ENCODE measurements at regions of chr1 and their contacts with region 1.

Region 1: DNA sequence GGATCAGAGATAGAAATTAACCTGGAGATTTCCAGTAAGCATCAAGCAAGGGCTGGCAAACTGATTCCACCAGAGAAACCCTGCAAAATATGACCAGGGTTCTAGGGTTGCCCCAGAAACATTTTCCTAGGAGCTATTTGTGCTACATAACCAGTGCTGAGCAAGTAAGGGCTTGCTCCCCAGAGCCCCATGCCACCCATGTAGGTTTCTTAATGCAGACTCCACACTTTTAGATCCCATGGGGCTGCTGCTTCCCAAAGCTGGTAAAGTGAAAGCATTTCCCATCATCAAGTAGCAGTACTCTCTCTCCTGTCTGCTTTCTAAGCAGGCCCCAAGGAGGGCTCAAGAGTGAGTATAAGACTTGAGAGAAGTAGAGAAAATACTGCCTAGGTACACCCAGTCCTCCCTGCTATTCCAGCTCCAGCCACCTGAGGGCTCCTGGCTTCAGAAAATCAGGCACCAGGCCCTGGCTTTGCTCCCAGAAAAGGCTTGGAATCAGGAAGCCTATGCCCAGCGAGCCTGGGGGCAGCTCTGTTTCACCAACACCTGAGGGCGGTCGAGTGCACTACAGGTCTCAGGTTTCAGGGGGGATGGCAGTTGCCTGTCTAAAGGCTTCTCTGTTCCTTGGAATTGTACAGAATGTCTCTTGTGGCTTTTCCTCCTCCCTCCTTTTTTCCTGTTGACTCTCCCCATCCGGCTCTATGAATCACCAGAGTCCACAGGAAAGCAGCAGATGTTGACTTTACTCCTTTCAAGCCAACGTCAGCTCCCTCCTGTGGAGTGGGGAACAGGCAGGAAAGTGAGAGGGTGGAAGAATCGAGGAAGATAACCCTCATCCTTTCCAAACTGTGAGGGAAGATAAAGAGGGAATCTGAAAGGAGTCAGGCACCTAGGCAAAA is 6.2 kb upstream of the ANKRD35 start:
- DNase-seq: peak; percentile 98
- H3K4me3 Mint-ChIP-seq: peak overlapping the region; percentile 31
- H3K27ac Mint-ChIP-seq: peak overlapping the region; percentile 71
- H3K4me1 Mint-ChIP-seq: peaks cover 66% of the 10 kb centered on the region
- H3K27me3 Mint-ChIP-seq: no peaks in the 10 kb centered on the region
- CTCF ChIP-seq: peak; percentile 96

Region 2: DNA sequence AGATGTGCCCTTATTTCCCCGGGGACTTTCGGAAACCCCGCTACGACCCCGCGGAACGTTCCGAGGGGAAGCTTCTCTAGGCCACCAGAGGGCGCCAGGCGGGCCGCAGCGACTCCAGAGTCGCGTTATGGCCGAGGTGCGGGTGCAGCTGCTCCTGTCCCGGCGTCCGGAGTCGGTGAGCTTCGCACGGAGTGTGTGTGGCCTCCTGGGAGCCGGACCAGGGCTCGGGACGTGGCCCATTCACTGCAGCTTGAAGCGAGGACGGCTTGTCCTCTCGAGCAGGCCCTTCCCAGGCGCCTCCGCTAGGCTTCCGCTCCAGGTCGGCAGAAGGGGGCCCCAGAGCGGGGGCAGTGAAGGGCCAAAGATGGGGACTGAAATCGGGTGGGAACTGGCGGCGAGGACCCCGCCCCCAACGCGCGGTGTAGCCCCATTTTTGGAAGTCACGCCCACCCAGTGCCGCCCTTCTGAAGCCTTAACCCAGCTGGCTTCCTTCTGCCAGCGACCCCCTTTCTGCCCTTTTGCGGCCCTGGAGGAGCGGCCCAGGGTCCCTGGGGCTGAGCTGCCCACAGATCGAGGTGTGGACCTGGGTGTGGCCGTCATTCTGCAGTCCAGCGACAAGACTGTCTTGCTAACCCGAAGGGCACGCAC is 46.2 kb before region 1 on chr1 and contains the start of gene NUDT17:
- CTCF ChIA-PET with region 1: interaction called, 49 read pairs
- intact Hi-C with region 1: loop called (anchors 1 kb)
- DNase-seq: peak; percentile 87
- H3K4me3 Mint-ChIP-seq: no peak within 1 kb of the TSS
- H3K27ac Mint-ChIP-seq: no peak within 1 kb of the TSS
- H3K4me1 Mint-ChIP-seq: peaks cover 10% of the 10 kb centered on the region
- H3K27me3 Mint-ChIP-seq: no peaks in the 10 kb centered on the region
- CTCF ChIP-seq: peak; percentile 92
- total RNA-seq, gene NUDT17: 2.8 and 4.0 TPM in 2 replicates

Region 3: DNA sequence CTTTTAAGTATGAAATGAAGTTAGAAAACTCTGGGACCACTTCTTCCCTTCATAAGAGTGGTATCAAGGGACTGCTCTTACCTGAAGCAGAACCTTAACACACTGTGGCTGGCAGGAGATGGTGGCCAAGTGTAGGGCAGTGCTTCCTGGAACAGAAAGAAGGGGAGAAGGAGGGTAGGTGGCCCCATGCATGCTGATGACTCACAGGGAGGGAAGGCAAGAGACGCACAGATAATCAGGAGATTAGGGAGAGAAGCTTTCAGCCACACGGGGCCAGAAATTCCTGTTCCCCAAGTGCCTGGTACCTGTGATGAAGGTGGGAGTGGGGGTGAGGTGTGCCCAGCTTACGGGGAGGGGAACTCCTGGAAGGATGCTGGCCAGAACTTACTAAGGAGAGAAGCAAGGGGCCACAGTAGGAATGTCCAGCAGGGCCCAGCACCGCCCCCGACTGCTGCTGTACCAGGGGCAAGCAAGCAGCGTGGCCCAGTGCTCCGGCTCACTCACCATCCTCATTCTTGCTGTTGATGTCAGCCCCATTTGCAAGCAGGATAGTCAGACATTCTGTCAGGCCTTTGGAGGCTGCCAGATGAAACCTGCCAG is 13.8 kb before region 1 on chr1:
- CTCF ChIA-PET with region 1: interaction called, 10 read pairs
- intact Hi-C with region 1: no loop called
- DNase-seq: peak; percentile 68
- H3K4me3 Mint-ChIP-seq: peak overlapping the region; percentile 24
- H3K27ac Mint-ChIP-seq: peak overlapping the region; percentile 71
- H3K4me1 Mint-ChIP-seq: peaks cover 40% of the 10 kb centered on the region
- H3K27me3 Mint-ChIP-seq: peaks cover 14% of the 10 kb centered on the region
- CTCF ChIP-seq: no peak

Region 4: GRCh38 chr1:145918144-145918992 is 26.5 kb after region 1 on chr1 and contains the start of gene PEX11B:
- CTCF ChIA-PET with region 1: interaction called, 18 read pairs
- intact Hi-C with region 1: no loop called
- DNase-seq: peak; percentile 90
- H3K4me3 Mint-ChIP-seq: peak within 1 kb of the TSS; percentile 74
- H3K27ac Mint-ChIP-seq: peak within 1 kb of the TSS; percentile 78
- H3K4me1 Mint-ChIP-seq: peaks cover 15% of the 10 kb centered on the region
- H3K27me3 Mint-ChIP-seq: no peaks in the 10 kb centered on the region
- CTCF ChIP-seq: no peak
- total RNA-seq, gene PEX11B: 27.1 and 27.3 TPM in 2 replicates

Region 5: GRCh38 chr1:145963995-145964901 is 72.4 kb after region 1 on chr1 and contains the starts of genes ANKRD34A and POLR3GL:
- CTCF ChIA-PET with region 1: interaction called, 12 read pairs
- intact Hi-C with region 1: no loop called
- DNase-seq: peak; percentile 94
- H3K4me3 Mint-ChIP-seq: peak within 1 kb of the TSS; percentile 89
- H3K27ac Mint-ChIP-seq: peak within 1 kb of the TSS; percentile 74
- H3K4me1 Mint-ChIP-seq: peaks cover 48% of the 10 kb centered on the region
- H3K27me3 Mint-ChIP-seq: peaks cover 48% of the 10 kb centered on the region
- CTCF ChIP-seq: no peak
- total RNA-seq, gene ANKRD34A: 0.19 and 0.27 TPM in 2 replicates
- total RNA-seq, gene POLR3GL: 9.9 and 11.5 TPM in 2 replicates

Region 6: DNA sequence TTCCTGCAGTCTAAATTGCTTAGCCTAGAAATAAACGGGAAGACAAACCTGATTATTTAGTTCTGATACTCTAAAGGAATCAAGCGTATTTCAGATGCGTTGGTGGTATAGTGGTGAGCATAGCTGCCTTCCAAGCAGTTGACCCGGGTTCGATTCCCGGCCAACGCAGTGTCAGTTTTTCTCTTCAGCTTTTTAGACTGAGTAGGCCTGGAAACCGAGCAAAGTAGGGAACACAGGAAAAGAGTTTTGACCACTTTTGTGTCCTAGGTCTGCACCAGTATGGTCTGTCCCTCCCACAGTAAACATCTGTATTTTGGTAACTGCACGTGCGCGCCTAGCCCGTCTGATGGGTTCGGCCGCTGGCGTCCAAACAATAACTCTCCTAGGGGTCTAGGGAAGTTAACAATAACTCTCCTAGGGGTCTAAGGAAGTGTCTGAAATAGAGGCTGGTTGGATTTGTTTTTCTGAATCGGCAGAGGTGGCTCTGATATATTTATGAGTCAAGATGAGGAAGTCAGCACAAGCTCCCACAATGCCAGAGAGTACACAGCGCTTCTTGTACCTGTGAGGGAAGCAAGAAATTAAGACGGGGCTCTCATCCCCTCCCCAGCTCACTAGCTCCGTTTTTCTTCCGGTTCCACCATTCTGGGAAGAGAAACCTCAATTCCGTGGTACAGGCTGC is 145.3 kb after region 1 on chr1:
- CTCF ChIA-PET with region 1: interaction called, 10 read pairs
- intact Hi-C with region 1: no loop called
- DNase-seq: peak; percentile 86
- H3K4me3 Mint-ChIP-seq: peak overlapping the region; percentile 89
- H3K27ac Mint-ChIP-seq: peak overlapping the region; percentile 98
- H3K4me1 Mint-ChIP-seq: peaks cover 31% of the 10 kb centered on the region
- H3K27me3 Mint-ChIP-seq: peaks cover 11% of the 10 kb centered on the region
- CTCF ChIP-seq: no peak

Measured in Calu3 (cell line).